Activated naive CD4-positive, alpha-beta T cell treated with anti-CD3 and anti-CD28 coated beads for 36 hours (primary cell): ENCODE measurements at regions of chr11 and their contacts with region 1.

Region 1: GRCh38 chr11:74449369-74449931 is 17.9 kb downstream of the KCNE3 start:
- DNase-seq: peak; percentile 52
- H3K4me3 Mint-ChIP-seq: no peak overlapping the region
- H3K27ac Mint-ChIP-seq: no peak overlapping the region
- H3K4me1 Mint-ChIP-seq: peaks cover 8% of the 10 kb centered on the region
- H3K27me3 Mint-ChIP-seq: peaks cover 2% of the 10 kb centered on the region

Region 2: DNA sequence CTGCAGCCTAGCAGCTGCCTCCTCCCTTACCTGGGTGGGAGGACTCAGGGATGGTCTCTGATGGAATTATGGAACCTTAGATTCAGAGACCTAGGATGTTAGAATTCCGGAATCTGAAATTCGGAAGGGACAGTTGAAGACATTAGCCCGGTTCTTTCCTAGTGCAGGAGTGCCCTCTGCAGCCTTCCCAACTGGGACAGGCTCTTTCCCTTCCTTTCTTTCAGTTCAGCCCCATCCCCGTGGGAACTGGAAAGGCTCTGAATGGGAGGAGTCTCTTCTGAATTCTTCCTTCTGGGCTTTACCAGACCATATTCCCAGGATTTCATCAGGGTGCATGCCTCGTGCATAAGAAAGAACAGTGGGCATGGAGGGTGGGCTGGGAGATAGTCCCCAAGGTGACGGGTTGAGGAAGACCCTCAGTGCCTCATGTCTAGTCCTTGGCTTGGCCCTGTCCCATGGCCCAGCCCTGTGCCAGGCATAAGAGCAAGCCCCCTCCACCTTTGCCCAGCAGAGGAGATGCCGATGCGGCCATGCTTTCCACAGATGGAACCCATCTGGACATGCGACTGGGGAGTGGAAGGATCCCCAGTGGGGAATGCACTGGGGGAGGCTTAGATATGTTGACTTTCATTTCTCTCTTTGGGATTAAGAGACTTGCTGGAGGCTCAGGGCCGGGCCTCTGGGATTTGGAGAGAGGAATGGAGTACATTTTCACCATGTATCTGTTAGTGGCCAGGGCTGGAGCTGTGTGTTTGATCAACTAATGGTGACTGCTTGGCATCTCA is 484.2 kb before region 1 on chr11:
- CTCF ChIA-PET with region 1: interaction called, 4 read pairs
- intact Hi-C with region 1: loop called (anchors 2 kb)
- DNase-seq: no peak
- H3K4me3 Mint-ChIP-seq: no peak overlapping the region
- H3K27ac Mint-ChIP-seq: no peak overlapping the region
- H3K4me1 Mint-ChIP-seq: peaks cover 44% of the 10 kb centered on the region
- H3K27me3 Mint-ChIP-seq: no peaks in the 10 kb centered on the region

Region 3: DNA sequence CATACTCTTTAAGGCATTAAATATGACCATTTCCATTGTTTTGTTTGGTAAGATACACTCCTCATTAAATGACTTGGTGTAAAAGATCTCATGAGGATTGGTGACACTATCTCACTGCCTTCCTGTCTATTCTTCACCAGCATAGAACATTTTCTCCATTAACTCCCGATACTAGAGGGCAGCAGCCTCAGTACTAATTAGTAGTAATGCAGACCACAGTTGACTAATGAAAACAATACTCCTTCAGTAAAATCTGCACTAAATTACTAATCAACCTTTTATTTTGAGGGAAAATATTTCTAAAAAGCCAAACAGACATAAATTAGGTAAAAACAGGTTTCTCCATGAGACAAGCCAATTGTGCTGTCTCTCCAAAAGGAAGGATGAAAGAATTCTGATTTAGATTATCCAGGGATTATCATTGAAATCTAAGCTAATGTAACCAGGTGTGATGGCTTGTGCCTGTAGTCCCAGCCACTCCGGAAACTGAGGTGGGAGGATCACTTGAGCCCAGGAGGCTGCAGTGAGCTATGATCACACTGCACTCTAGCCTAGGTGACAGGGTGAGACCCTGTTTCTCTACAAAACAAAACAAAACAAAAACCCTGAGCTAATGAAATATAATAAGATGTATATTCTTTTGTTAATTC is 60.6 kb before region 1 on chr11:
- CTCF ChIA-PET with region 1: interaction called, 128 read pairs
- intact Hi-C with region 1: loop called (anchors 1 kb)
- DNase-seq: peak; percentile 90
- H3K4me3 Mint-ChIP-seq: no peak overlapping the region
- H3K27ac Mint-ChIP-seq: peak overlapping the region; percentile 72
- H3K4me1 Mint-ChIP-seq: peaks cover 33% of the 10 kb centered on the region
- H3K27me3 Mint-ChIP-seq: no peaks in the 10 kb centered on the region

Region 4: DNA sequence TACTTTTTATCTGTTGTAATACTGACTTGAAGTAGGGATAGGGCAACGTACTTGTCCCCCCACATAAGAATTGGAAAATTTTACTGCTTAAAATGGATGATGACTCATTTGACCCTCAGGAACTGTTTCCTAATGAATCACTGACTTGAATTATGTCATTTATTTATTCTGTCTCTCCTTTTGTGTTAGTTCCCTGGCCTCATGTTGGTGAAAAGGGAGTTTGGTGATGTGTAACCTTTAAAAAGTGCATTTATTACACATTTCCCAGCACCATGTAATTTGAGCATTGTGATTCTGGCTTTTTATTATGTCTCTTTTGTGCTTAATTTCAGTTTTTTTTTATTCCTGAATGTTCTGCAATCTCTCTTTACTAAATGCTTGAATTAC is 30.9 kb before region 1 on chr11:
- CTCF ChIA-PET with region 1: interaction called, 6 read pairs
- intact Hi-C with region 1: loop called (anchors 1 kb)
- DNase-seq: no peak
- H3K4me3 Mint-ChIP-seq: no peak overlapping the region
- H3K27ac Mint-ChIP-seq: peak overlapping the region; percentile 83
- H3K4me1 Mint-ChIP-seq: peaks cover 28% of the 10 kb centered on the region
- H3K27me3 Mint-ChIP-seq: no peaks in the 10 kb centered on the region

Region 5: DNA sequence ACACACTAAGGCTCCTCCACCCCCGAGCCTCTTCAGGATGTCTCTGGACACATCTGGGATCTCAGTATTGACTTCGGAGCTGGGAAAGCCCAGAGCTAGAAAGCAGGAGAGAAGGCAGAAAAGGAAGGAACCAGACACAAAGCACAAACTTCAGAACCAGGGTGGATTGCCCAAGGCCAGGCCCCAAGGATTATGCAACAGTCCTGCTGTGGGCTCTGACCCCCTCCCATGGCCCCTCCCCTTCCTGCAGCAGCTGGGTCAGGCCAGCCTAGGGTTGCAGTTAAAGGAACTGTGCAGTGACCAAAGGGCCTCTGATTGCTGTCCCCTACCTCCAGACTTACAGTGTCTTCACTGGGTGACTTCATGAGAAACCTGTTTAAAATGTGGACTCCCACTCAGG is 12.6 kb after region 1 on chr11:
- CTCF ChIA-PET with region 1: interaction called, 15 read pairs
- intact Hi-C with region 1: no loop called
- DNase-seq: no peak
- H3K4me3 Mint-ChIP-seq: no peak overlapping the region
- H3K27ac Mint-ChIP-seq: no peak overlapping the region
- H3K4me1 Mint-ChIP-seq: peaks cover 2% of the 10 kb centered on the region
- H3K27me3 Mint-ChIP-seq: peaks cover 20% of the 10 kb centered on the region

Region 6: GRCh38 chr11:74492974-74493790 is 43.7 kb after region 1 on chr11 and contains the start of gene LIPT2:
- CTCF ChIA-PET with region 1: interaction called, 21 read pairs
- intact Hi-C with region 1: no loop called
- DNase-seq: peak; percentile 99
- H3K4me3 Mint-ChIP-seq: peak within 1 kb of the TSS; percentile 83
- H3K27ac Mint-ChIP-seq: peak within 1 kb of the TSS; percentile 95
- H3K4me1 Mint-ChIP-seq: peaks cover 17% of the 10 kb centered on the region
- H3K27me3 Mint-ChIP-seq: no peaks in the 10 kb centered on the region
- total RNA-seq, gene LIPT2: 3.1 to 5.6 TPM

Region 7: DNA sequence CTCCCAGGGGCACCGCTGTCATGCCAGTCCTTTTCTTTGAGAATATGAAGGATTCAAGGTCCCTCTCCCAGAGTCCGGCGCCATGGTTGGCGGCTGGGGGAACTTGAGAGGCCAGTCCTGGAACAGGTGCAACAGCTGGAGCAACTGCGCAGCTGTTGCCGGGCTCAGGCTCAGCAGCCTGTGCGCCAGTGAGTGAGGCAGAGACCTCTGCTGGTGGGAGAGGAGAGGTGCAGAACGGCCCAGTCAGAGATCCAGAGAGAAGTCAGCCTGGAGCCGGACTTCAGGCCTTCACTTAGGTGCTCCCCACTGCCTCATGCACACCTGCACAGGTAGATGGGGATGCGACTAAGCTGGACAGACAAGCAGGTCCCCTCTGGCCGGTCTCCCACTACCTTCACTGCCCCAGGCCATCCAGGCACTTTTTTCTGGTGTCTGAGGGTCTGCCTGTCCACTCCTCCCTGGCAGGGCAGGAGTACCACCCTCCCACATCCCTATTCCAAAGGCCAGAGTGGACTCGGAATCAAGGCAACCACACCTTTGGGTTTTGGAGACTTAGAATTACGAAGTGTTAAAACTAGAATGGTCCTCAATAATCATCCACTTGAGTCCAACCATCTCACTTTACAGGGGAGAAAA is 277.2 kb after region 1 on chr11:
- CTCF ChIA-PET with region 1: interaction called, 7 read pairs
- intact Hi-C with region 1: loop called (anchors 1 kb)
- DNase-seq: peak; percentile 69
- H3K4me3 Mint-ChIP-seq: no peak overlapping the region
- H3K27ac Mint-ChIP-seq: no peak overlapping the region
- H3K4me1 Mint-ChIP-seq: peaks cover 9% of the 10 kb centered on the region
- H3K27me3 Mint-ChIP-seq: peaks cover 27% of the 10 kb centered on the region